ENCODE measurements at regions of chr20 and their contacts with region 1.

Region 1: GRCh38 chr20:10090588-10091166 is 55.9 kb downstream of the ANKEF1 start:
- DNase-seq: peak; percentile 39
- ATAC-seq: peak; percentile 91
- H3K4me3 Mint-ChIP-seq: no peak overlapping the region
- H3K27ac Mint-ChIP-seq: no peak overlapping the region
- H3K4me1 Mint-ChIP-seq: peaks cover 23% of the 10 kb centered on the region
- H3K27me3 Mint-ChIP-seq: no peaks in the 10 kb centered on the region
- CTCF ChIP-seq: peak; percentile 51

Region 2: GRCh38 chr20:9857403-9857802 is 233.3 kb before region 1 on chr20:
- CTCF ChIA-PET with region 1: no interaction called
- POLR2A ChIA-PET with region 1: no interaction called
- DNase-seq: no peak
- ATAC-seq: no peak
- H3K4me3 Mint-ChIP-seq: no peak overlapping the region
- H3K27ac Mint-ChIP-seq: no peak overlapping the region
- H3K4me1 Mint-ChIP-seq: no peaks in the 10 kb centered on the region
- H3K27me3 Mint-ChIP-seq: no peaks in the 10 kb centered on the region; the same call in 1 of the 2 replicates
- CTCF ChIP-seq: no peak

Region 3: DNA sequence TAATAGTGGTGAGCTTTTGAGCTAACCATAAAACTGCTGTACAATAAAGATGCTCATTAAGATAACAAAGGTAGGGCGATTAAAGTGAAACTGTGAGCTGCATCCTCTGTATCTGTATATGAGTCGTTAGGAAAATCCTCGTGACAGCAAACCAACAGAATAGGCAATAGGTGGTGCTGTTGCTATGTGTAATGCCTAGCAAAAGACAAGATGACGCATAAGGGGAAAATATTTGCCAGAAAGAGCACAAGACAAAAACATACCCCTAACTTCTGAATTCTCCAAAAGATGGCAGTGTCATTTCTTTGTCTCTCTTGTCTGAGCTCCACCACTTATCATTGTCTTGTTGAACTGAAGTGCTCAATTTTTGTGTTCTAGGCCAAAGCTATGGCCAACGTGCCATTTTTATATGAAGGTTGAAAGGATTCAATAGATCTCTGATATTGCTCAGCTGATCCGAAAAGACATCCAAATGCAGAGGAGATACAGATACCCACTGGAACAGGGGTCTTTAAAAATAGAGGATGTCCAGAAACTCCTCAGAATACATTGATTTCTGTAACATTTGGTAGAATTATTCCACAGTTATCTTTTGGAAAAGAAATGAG is 112.2 kb before region 1 on chr20:
- CTCF ChIA-PET with region 1: interaction called, 34 read pairs
- POLR2A ChIA-PET with region 1: no interaction called
- DNase-seq: no peak
- ATAC-seq: peak; percentile 84
- H3K4me3 Mint-ChIP-seq: no peak overlapping the region
- H3K27ac Mint-ChIP-seq: no peak overlapping the region
- H3K4me1 Mint-ChIP-seq: peaks cover 4% of the 10 kb centered on the region
- H3K27me3 Mint-ChIP-seq: no peaks in the 10 kb centered on the region
- CTCF ChIP-seq: peak; percentile 36; the same call in 1 of the 2 replicates

Region 4: GRCh38 chr20:10047427-10047826 is 43.2 kb before region 1 on chr20:
- CTCF ChIA-PET with region 1: interaction called, 25 read pairs
- POLR2A ChIA-PET with region 1: no interaction called
- DNase-seq: peak; percentile 62
- ATAC-seq: peak; percentile 98
- H3K4me3 Mint-ChIP-seq: no peak overlapping the region
- H3K27ac Mint-ChIP-seq: no peak overlapping the region
- H3K4me1 Mint-ChIP-seq: no peaks in the 10 kb centered on the region
- H3K27me3 Mint-ChIP-seq: no peaks in the 10 kb centered on the region
- CTCF ChIP-seq: 0 out of 2 replicates have a peak, but pooled peaks have one; percentile 36

Region 5: DNA sequence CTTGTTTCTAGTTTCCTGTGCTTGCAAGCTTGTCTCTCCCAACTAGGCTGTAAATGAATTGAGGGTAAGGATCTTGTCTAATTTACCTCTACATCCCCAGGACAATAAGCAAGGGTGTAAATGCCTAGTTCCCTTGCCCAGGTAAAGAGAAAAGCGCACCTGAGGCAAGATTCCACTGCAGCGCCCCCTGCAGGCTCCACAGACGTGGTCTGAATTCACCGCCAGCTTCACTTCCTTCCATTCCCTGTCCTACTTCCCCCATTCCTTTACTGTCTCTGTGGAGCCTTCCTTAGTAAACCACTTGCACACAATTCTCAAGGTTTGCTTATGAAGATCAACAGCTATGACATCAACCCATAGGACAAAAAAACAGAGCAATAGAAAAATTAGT is 13.6 kb before region 1 on chr20:
- CTCF ChIA-PET with region 1: interaction called, 12 read pairs
- POLR2A ChIA-PET with region 1: no interaction called
- DNase-seq: peak; percentile 77
- ATAC-seq: peak; percentile 87
- H3K4me3 Mint-ChIP-seq: no peak overlapping the region
- H3K27ac Mint-ChIP-seq: no peak overlapping the region
- H3K4me1 Mint-ChIP-seq: no peaks in the 10 kb centered on the region; the same call in 1 of the 2 replicates
- H3K27me3 Mint-ChIP-seq: no peaks in the 10 kb centered on the region; the same call in 1 of the 2 replicates
- CTCF ChIP-seq: peak; percentile 86

Region 6: DNA sequence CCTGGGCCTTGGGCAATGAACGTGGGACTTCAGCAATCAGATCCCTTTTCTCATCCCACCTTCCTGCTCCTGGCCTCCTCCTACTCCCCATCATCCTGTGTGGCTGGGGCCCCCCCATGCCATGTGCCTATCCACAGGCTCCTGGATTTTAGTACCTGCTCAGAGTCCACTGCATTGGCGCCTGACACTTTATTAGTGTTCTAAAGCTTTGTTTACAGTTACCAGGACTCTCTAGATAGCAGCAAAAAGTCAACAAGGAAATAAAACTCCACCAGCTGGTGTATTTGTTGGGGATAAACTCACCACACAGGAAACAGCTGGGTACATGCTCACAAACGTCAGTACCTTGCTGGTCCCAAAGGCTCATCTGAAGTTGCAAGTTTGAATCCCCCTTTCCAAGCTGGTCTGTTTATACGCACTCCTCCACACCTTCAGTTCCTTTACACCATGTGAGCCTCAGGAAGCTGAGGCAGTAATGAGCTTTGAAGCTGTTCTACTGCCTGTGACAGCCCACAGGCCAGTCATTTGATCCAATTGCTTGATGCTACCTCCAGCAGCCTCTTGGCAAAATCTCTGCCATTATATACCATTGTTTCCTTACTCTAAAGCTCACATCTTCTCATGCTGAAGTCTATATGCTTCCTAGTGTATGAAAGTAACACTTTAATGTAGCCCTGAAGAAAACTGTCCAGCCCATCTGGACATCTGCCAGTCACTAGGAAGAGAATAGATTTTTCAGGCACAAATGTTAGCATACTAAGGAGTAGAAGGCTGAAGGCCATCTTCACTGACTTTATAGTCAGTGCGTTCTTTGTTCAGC is 20.7 kb after region 1 on chr20:
- CTCF ChIA-PET with region 1: interaction called, 10 read pairs
- POLR2A ChIA-PET with region 1: no interaction called
- DNase-seq: no peak
- ATAC-seq: no peak
- H3K4me3 Mint-ChIP-seq: no peak overlapping the region
- H3K27ac Mint-ChIP-seq: no peak overlapping the region
- H3K4me1 Mint-ChIP-seq: no peaks in the 10 kb centered on the region
- H3K27me3 Mint-ChIP-seq: no peaks in the 10 kb centered on the region; the same call in 1 of the 2 replicates
- CTCF ChIP-seq: no peak

Region 7: DNA sequence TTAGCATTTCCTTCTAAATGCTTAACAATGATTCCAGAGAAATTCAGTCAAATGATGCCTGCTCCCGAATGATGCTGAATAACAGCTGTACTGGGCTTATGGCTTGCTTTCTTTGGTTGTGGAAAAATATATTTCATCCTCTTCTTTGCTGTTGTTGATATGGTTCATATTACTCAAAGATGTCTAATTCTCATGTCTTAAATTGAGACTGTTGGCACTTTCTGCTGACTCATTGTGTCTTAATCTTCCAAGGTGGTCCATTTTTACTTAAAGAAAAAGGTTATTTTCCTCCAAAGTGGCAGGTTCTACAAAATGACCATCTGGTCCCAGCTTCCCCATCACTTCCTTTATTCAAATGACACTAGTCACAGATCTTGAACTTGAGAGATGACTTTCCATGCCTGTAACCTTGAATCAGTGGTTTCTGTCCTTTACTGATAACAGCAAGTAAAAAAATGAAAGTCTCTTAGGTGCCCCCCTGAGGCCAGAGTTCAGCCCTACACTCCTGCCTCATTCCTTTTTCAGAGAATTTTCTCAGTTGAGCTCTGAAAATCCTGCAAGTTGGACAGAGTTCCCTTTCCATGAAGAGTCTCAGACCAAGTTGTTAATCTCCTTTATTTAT is 134.9 kb after region 1 on chr20:
- CTCF ChIA-PET with region 1: interaction called, 12 read pairs
- POLR2A ChIA-PET with region 1: no interaction called
- DNase-seq: no peak
- ATAC-seq: peak; percentile 88
- H3K4me3 Mint-ChIP-seq: no peak overlapping the region
- H3K27ac Mint-ChIP-seq: peak overlapping the region; percentile 39
- H3K4me1 Mint-ChIP-seq: peaks cover 26% of the 10 kb centered on the region
- H3K27me3 Mint-ChIP-seq: peaks cover 10% of the 10 kb centered on the region
- CTCF ChIP-seq: peak; percentile 34; the same call in 1 of the 2 replicates